Common myeloid progenitor, CD34-positive (primary cell): ENCODE measurements at regions of chr5 and their contacts with region 1.

Region 1: GRCh38 chr5:101942321-101943215 is 353.5 kb downstream of the SLCO4C1 start:
- DNase-seq: peak; percentile 42 to 74 (median 58)
- H3K4me3 ChIP-seq: no peak overlapping the region
- H3K27ac ChIP-seq: no peak overlapping the region
- H3K4me1 ChIP-seq: peaks cover 0 to 2% (median 0%) of the 10 kb centered on the region in 4 experiments
- H3K27me3 ChIP-seq: no peaks in the 10 kb centered on the region

Region 2: DNA sequence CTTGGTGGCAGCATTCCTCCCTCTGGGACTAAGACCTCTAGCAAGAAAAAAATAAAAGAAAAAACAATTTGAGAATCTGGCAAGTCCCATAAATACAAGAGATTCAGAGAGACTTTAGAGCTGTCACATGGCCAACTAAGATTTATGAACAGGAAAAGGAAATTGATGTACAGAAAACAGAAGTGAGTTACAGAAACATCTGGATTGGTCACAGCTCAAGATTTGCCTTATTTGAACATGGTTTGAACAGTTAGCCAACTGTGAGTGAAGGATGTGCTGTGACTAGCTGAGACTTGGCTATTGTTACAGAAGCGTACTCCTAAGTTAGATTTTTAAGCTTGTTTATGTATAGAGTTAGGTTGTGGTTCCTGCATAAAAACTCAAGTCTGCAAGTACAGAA is 13.3 kb after region 1 on chr5:
- CTCF ChIA-PET with region 1: interaction called, 12 read pairs
- POLR2A ChIA-PET with region 1: no interaction called
- DNase-seq: peak; percentile 22 to 80 (median 72)
- H3K4me3 ChIP-seq: no peak overlapping the region
- H3K27ac ChIP-seq: no peak overlapping the region
- H3K4me1 ChIP-seq: peaks cover 0 to 7% (median 3%) of the 10 kb centered on the region in 4 experiments
- H3K27me3 ChIP-seq: no peaks in the 10 kb centered on the region

Region 3: GRCh38 chr5:101977729-101978345 is 35.3 kb after region 1 on chr5:
- CTCF ChIA-PET with region 1: interaction called, 47 read pairs
- POLR2A ChIA-PET with region 1: no interaction called
- DNase-seq: peak; percentile 49 to 77 (median 76)
- H3K4me3 ChIP-seq: no peak overlapping the region
- H3K27ac ChIP-seq: no peak overlapping the region
- H3K4me1 ChIP-seq: no peaks in the 10 kb centered on the region
- H3K27me3 ChIP-seq: peaks cover 0 to 2% (median 0%) of the 10 kb centered on the region in 5 experiments

Region 4: GRCh38 chr5:102090770-102091381 is 148.3 kb after region 1 on chr5:
- CTCF ChIA-PET with region 1: interaction called, 34 read pairs
- POLR2A ChIA-PET with region 1: no interaction called
- DNase-seq: peak; percentile 31 to 71 (median 70)
- H3K4me3 ChIP-seq: no peak overlapping the region
- H3K27ac ChIP-seq: no peak overlapping the region
- H3K4me1 ChIP-seq: peaks cover 0 to 4% (median 0%) of the 10 kb centered on the region in 4 experiments
- H3K27me3 ChIP-seq: no peaks in the 10 kb centered on the region